Head of caudate nucleus (tissue), 42 donors: ENCODE measurements at regions of chr1 and their contacts with region 1.

Region 1: DNA sequence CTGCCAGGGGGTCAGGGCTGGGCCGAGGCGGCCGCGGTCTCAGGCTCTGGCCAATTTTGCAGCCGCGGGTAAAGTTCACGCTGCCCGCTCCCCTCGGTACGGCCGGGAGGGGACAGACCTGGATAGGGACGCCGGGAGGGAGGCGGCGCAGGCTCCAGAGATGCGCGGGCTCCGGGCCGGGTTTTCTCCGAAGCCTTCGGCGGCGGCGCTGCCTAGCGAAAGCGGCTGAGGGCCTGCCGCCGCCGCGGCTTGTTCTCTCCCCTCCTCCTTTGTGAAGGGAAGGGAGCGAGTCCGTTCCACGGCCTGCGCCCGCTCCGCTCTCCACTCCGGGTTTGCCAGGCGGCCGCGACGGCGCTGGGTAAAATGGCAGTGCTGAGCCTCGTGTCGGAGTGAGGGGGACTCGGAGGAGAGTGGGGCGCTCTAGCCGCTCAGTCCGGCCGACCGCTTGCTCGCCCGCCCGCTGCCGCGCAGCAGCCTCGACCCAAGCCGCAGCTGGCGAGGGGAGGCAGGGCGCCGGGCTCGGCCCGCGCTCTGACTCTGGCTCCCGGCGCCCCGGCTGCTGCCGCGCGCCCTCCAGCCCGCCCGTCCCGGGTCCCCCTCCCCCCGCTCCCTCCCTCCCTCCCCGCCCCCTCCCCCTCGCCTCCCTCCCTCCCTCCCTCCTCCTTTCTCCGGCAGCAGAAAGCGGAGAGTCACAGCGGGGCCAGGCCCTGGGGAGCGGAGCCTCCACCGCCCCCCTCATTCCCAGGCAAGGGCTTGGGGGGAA is at the start of gene ARID1A:
- DNase-seq: peak; percentile 86 to 97 (median 94)

Region 2: GRCh38 chr1:26483980-26484379 is 211.6 kb before region 1 on chr1:
- intact Hi-C with region 1: no loop called
- DNase-seq: no peak

Region 3: DNA sequence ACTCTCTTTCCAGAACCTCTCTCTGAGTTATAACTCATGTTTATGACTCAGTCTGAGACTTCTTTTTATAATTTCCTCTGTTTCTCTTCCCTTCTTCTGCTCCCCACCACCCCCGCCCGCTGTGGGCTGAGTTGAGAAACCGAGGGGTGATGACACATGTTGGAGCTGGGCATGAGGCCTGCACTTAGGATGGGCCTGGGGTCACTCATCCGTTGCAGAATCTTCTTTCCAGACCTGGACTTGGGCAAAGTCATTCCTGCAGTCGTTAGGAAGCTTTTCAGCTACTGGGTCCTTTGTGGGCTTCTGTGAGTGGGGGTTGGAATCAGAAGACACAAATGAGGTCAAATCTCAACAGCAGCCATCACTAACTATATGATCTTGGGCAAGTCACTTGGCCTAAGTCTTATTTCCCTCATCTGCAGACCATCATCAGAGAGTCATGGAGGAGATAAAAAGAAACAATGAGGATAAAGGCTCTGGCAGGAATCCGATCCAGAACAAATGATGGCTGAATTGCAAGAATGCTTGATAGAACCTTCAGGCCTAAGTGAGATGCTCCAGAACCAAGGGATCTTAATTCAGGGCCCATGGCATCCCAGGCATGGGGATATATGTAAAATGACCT is 112.6 kb before region 1 on chr1:
- intact Hi-C with region 1: no loop called
- DNase-seq: peak in 5 of 42 donors; percentile 14 to 47 (median 38)

Region 4: DNA sequence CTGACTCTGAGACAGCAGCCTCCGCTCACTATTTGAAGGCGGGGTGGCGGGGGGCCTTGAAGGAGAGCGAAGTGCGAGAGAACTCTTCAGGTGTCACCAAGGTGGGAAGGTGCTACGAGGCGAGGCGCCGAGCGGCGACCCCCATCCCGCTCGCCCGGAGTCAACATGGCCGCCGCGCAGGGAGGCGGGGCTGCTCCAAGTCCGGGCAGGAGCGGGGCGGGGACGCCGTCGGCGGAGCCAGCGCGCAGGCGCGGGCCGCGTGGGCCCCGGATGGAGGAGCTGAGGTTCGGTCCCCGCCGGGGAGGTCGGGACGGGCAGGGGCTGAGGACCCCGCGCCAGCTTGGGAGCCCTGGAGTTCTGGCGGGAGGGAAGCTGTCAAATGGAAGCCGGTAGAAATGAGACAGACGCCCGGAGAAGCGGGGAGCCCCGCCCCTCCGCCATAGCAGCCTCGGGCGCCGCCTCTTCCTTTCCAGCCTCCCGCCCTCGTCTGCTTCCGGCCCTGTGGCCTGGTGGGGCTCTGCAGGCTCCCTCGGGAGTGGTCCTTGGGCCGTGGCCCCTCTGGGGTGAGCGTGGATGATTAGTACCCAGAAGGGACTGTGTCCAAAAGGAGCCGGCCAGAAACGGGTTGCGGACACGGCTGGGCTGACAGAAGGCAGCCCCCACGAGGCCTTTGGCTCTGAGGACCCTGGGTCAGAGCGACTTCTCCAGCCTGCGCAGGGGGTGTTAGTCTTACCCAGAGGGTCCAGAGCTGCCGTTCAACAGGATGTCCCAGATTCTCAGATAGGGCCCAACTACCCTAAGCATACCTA is 92.4 kb after region 1 on chr1 and contains the start of gene PIGV:
- intact Hi-C with region 1: loop called (anchors 2 kb)
- DNase-seq: peak; percentile 68 to 95 (median 90)

Region 5: GRCh38 chr1:27234049-27234882 is 538.7 kb after region 1 on chr1 and contains the start of gene WDTC1:
- intact Hi-C with region 1: loop called (anchors 10 kb)
- DNase-seq: peak; percentile 95 to 100 (median 99)